Activated CD8-positive, alpha-beta memory T cell treated with anti-CD3 and anti-CD28 coated beads, Interleukin-2, amount 10 ng/mL, durations not matched to agents 7 days and 5 days (primary cell): ENCODE measurements at regions of chr17 and their contacts with region 1.

Region 1: DNA sequence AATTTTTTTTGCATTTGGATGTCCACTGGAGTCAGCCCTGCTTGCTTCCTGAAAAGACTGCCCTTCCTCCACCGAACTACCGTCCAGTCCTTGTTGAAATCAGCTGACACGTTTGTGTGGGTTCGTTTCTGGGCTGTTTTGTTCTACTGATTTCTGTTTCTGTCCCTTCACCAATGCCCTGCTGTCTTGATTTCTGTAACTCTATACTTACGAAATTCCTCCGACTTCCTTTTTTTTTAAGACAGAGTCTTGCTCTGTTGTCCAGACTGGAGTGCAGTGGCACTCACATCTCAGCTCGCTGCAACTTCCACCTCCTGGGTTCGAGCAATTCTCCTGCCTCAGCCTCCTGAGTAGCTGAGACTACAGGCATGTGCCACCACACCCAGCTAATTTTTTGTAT is 8.4 kb upstream of the GAA start:
- DNase-seq: no peak
- ATAC-seq: no peak
- H3K4me3 Mint-ChIP-seq: no peak overlapping the region
- H3K27ac Mint-ChIP-seq: no peak overlapping the region
- H3K4me1 Mint-ChIP-seq: no peaks in the 10 kb centered on the region
- H3K27me3 Mint-ChIP-seq: peaks cover 5% of the 10 kb centered on the region

Region 2: GRCh38 chr17:80082403-80083135 is 10.4 kb before region 1 on chr17:
- CTCF ChIA-PET with region 1: interaction called, 13 read pairs
- DNase-seq: peak; percentile 75
- ATAC-seq: peak; percentile 76
- H3K4me3 Mint-ChIP-seq: no peak overlapping the region
- H3K27ac Mint-ChIP-seq: no peak overlapping the region
- H3K4me1 Mint-ChIP-seq: peaks cover 1% of the 10 kb centered on the region
- H3K27me3 Mint-ChIP-seq: peaks cover 7% of the 10 kb centered on the region